CD4-positive, alpha-beta T cell (primary cell): ENCODE measurements at regions of chr18 and their contacts with region 1.

Region 1: DNA sequence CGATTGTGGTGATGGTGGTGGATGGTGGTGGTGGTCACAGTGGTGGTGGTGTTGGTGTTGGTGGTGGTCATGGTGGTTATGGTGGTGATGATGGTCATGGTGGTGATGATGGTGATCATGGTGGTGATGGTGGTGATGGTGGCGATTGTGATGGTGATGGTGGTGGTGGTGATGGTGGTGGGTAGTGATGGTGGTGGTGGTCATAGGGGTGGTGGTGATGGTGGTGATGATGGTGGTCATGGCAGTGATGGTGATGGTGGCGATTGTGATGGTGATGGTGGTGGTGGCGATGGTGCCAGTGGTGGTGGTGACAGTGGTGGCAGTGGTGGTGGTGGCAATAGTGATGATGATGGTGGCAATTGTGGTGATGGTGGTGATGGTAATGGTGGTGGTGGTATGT is 9.7 kb downstream of the GALR1 start:
- DNase-seq: no peak
- ATAC-seq: no peak
- H3K4me3 ChIP-seq: no peak overlapping the region
- H3K4me3 Mint-ChIP-seq: no peak overlapping the region
- H3K27ac ChIP-seq: no peak overlapping the region
- H3K27ac Mint-ChIP-seq: no peak overlapping the region
- H3K4me1 ChIP-seq: no peaks in the 10 kb centered on the region
- H3K4me1 Mint-ChIP-seq: no peaks in the 10 kb centered on the region
- H3K27me3 ChIP-seq: peaks cover 6 to 7% of the 10 kb centered on the region in 2 experiments
- H3K27me3 Mint-ChIP-seq: peaks cover 32% of the 10 kb centered on the region
- CTCF ChIP-seq: no peak

Region 2: DNA sequence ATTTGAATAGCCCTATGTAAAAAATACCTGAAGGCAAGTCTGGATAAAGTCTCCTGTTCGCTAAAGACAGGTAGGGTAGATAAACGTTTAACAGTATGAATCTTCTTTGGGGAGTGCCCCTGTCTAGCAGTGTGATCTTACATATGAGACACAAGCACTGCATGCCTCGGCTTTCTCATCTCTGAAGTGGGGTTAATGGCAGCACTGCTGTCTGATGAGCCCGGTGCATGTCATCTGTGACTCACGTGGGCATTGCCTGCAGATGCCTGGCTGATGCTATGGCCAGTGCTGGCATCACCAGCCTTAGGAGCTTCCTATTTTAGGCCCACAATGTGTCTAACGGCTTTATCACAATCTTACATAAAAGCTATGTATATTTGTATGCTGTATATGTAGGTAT is 40.4 kb after region 1 on chr18:
- CTCF ChIA-PET with region 1: no interaction called
- POLR2A ChIA-PET with region 1: no interaction called
- intact Hi-C with region 1: loop called in 1 of 2 experiments (anchors 1 kb)
- DNase-seq: no peak
- ATAC-seq: no peak
- H3K4me3 ChIP-seq: no peak overlapping the region
- H3K4me3 Mint-ChIP-seq: no peak overlapping the region
- H3K27ac ChIP-seq: no peak overlapping the region
- H3K27ac Mint-ChIP-seq: no peak overlapping the region
- H3K4me1 ChIP-seq: no peaks in the 10 kb centered on the region
- H3K4me1 Mint-ChIP-seq: no peaks in the 10 kb centered on the region
- H3K27me3 ChIP-seq: peaks cover 4 to 11% of the 10 kb centered on the region in 2 experiments
- H3K27me3 Mint-ChIP-seq: peaks cover 5% of the 10 kb centered on the region
- CTCF ChIP-seq: no peak